Right ventricle myocardium inferior (tissue), 1 donor: ENCODE measurements at regions of chr12 and their contacts with region 1.

Region 1: GRCh38 chr12:108950991-108951739 is 69.7 kb downstream of the SVOP start:
- DNase-seq: peak; percentile 87
- ATAC-seq: peak; percentile 50

Region 2: GRCh38 chr12:108562348-108563135 is 388.6 kb before region 1 on chr12 and contains the start of gene ISCU:
- intact Hi-C with region 1: loop called (anchors 5 kb)
- DNase-seq: peak; percentile 98
- ATAC-seq: peak; percentile 91
- total RNA-seq, gene ISCU: 444 TPM

Region 3: GRCh38 chr12:108664338-108665258 is 286.6 kb before region 1 on chr12:
- intact Hi-C with region 1: loop called (anchors 2 kb)
- DNase-seq: peak; percentile 77
- ATAC-seq: peak; percentile 91

Region 4: GRCh38 chr12:108856428-108857157 is 94.6 kb before region 1 on chr12:
- intact Hi-C with region 1: no loop called
- DNase-seq: peak; percentile 90
- ATAC-seq: peak; percentile 62

Region 5: DNA sequence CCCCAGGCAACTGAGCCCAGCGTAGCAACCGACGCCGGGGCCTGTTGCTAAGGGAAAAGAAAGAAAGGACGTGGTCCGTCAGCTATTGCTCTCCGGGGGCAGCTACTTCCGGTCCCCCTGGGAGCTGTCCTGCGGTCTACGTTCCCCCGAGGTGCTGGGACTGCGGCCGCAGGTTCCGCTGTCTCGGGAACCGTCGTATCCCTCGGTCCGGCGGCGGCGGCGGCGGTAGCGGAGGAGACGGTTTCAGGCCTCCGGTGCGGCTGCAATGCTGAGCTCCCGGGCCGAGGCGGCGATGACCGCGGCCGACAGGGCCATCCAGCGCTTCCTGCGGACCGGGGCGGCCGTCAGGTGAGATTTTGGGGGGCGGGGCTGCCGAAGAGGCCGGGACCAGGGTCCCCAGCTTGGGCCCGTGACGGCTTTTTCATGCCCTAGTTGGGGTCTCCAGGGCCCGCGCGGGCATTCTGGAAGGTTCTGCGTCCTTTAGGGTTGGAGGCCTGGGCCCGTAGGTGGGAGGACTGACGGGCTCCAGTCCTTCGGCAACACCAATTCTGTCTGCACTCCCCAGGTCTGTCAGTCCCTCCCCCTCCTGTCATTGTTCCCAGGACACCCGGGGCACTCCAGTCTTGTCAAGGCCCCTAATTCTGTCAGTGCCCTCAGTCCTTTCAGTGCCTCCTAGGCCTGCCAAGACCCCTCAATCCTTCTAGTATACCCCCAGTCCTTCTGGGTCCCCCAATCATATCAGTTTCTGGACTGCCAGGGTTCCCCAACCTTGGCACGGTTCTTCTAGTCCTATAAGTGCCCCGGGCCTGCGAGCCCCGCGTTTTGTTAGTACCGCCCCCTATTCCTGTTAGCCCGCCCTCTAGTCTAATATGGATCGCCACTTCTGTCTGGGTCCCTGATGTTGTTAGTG is 101.5 kb after region 1 on chr12 and contains the start of gene USP30:
- intact Hi-C with region 1: loop called (anchors 10 kb)
- DNase-seq: peak; percentile 91
- ATAC-seq: peak; percentile 97
- total RNA-seq, gene USP30: 13.5 TPM